Prostate gland (tissue), 2 donors: ENCODE measurements at regions of chr4 and their contacts with region 1.

Region 1: DNA sequence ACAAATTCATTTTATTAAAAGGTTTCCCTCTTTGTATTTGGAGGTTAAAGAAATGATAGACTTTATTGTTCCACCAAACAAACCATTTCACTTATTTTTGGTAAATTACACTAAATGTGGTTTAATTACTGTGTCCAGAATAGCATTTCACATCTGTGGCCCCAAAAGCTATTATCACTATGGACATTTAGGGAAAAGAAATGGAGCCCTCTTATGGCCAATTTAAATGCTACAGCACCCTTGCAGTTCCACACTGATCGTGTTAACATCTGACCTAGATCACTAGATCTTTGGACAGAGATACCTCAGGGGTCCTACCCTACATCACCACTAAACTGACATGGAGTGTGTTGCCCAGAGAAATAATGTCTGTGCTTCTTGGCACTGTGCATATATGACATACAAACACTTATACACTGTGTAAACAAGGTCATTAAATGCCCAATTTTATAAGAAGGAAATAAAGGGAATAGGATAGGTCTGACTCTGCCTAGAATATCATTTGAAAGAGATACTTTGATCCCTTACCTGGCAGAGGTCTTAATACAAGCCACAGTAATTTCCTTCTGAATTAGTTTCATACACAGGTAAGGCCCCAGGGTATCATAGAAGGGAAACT is 163.9 kb downstream of the KDR start:
- DNase-seq: no peak
- H3K4me3 ChIP-seq: no peak overlapping the region
- H3K27ac ChIP-seq: no peak overlapping the region
- H3K4me1 ChIP-seq: no peaks in the 10 kb centered on the region
- H3K27me3 ChIP-seq: no peaks in the 10 kb centered on the region
- CTCF ChIP-seq: peak in 3 of 4 experiments; percentile 18 to 49 (median 42)
- POLR2A ChIP-seq: no peak

Region 2: DNA sequence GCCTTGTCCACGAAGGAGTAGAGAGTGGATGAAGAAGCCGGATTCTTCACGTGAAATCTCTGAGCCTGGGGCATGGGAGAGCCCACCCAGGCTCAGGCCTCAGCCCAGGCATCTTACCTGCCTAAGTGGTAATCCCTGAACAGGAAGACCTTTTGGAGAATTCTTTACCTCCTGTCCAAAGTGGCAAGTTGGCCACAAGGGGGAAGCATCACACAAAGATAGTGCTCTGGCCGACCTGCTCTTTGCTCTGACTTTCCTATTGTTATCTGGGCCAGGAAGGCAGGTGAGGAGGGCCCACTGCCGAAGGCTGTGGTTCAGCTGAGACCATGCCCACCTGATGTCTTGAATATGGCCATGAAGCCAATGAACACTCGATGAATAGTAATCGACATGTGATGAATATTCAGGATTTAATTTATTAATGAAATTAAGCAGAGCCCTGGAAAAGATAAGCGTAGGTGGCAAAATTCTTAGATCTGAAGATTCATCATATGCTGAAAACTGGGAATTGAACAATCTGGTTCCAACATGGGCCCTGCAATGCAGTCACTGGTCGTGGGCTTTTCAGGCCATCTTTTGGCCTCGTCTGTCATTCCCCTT is 638.5 kb before region 1 on chr4:
- intact Hi-C with region 1: loop called (anchors 5 kb)
- DNase-seq: peak; percentile 60
- H3K4me3 ChIP-seq: no peak overlapping the region
- H3K27ac ChIP-seq: no peak overlapping the region
- H3K4me1 ChIP-seq: no peaks in the 10 kb centered on the region
- H3K27me3 ChIP-seq: no peaks in the 10 kb centered on the region
- CTCF ChIP-seq: peak in 3 of 4 experiments; percentile 58 to 75 (median 72)
- POLR2A ChIP-seq: no peak

Region 3: GRCh38 chr4:54661686-54662085 is 299.8 kb before region 1 on chr4:
- intact Hi-C with region 1: loop called (anchors 10 kb)
- DNase-seq: no peak
- H3K4me3 ChIP-seq: no peak overlapping the region
- H3K27ac ChIP-seq: no peak overlapping the region
- H3K4me1 ChIP-seq: no peaks in the 10 kb centered on the region
- H3K27me3 ChIP-seq: no peaks in the 10 kb centered on the region
- CTCF ChIP-seq: no peak
- POLR2A ChIP-seq: no peak

Region 4: DNA sequence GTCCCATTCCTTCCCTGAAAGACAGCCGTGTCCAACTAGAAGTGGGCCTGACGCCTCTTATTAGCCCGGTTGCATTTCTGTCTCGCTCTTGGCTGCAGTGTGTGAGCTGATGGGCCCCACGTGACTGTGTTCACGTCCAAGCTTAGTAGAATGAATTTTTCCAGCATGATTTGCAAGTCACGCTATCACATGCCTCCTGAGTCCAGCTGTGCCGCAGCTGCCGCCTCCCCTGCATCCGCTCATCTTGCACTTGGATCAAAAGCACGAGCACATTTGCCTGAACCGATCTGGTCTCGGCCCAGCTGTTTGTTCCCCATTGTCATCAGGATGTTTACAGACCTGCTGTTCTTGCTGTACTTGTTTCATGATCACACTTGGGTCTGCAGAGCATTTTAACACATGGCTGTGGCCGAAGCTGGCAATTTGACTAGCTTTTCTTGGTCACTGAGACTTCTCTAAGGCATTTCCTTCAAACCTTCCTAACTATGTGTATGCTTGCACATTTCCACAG is 177.2 kb before region 1 on chr4:
- intact Hi-C with region 1: loop called (anchors 10 kb)
- DNase-seq: peak; percentile 12
- H3K4me3 ChIP-seq: no peak overlapping the region
- H3K27ac ChIP-seq: no peak overlapping the region
- H3K4me1 ChIP-seq: no peaks in the 10 kb centered on the region
- H3K27me3 ChIP-seq: no peaks in the 10 kb centered on the region
- CTCF ChIP-seq: no peak
- POLR2A ChIP-seq: no peak

Region 5: DNA sequence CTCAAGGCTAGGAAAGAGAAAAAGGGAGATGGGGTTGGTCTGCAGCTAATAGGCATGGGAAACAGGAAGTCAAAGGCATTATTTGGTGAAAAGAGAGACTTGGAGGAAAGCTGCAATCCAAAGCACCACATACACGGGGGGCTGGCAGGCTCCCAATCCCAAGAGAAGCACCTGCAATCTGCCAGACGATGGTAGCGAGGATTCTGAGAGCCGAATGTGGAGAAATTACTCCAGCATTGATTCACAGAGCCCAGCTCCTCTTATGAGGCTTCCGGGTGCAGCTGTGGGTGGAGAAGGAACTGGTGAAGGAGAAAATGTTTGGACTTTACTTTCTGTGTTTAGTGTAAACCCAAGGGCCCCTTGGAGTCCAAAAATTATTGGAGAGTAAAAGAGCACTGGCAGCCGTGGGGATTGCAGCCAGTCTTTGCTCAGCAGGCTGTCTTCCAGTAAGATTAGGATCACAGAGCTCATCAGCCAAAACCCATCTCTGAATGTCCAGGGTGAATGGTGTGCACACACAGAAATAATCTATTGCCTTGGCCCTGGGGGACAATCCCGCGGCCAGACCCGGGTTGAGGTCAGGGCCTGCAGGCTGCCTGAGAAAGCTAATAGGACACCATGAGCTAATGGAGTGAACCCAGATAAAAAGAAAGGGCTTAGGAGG is 106.1 kb before region 1 on chr4:
- intact Hi-C with region 1: loop called (anchors 10 kb)
- DNase-seq: no peak
- H3K4me3 ChIP-seq: no peak overlapping the region
- H3K27ac ChIP-seq: no peak overlapping the region
- H3K4me1 ChIP-seq: no peaks in the 10 kb centered on the region
- H3K27me3 ChIP-seq: no peaks in the 10 kb centered on the region
- CTCF ChIP-seq: no peak
- POLR2A ChIP-seq: no peak

Region 6: GRCh38 chr4:55554453-55555030 is 593.1 kb after region 1 on chr4:
- intact Hi-C with region 1: loop called (anchors 10 kb)
- DNase-seq: no peak
- H3K4me3 ChIP-seq: no peak overlapping the region
- H3K27ac ChIP-seq: no peak overlapping the region
- H3K4me1 ChIP-seq: no peaks in the 10 kb centered on the region
- H3K27me3 ChIP-seq: no peaks in the 10 kb centered on the region
- CTCF ChIP-seq: peak; percentile 37 to 63 (median 44)
- POLR2A ChIP-seq: no peak